A673 (cell line): ENCODE measurements at regions of chr5 and their contacts with region 1.

Region 1: DNA sequence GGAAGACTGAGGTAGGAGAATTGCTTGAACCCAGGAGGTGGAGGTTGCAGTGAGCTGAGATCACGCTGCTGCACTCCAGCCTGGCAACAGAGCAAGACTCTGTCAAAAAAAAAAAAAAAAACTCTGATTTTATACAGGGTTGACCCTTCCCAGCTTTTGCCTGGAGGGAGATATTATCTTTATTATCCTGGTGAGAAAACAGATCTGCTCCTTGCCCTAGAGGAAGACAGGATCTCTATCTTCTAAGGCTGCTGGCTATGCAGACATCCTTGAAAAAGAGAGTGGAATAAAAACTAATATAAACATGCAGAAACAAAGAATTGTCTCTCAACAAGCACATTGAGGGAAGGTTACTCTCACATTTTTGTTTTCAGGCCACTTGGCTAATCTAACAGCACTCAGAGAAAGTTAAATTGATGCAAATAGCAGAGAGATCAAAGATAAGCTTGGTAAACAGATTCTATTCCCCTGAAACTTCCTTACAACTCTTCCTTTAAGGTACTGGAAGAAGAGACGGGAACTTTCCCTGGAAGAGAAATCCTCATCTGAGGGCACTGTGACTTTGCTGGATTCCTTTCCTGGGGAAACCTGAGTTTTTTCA is 1503.3 kb upstream of the WWC1 start:
- DNase-seq: no peak
- H3K4me3 ChIP-seq: no peak overlapping the region
- H3K27ac ChIP-seq: no peak overlapping the region
- H3K4me1 ChIP-seq: no peaks in the 10 kb centered on the region
- H3K27me3 ChIP-seq: peaks cover under 1% of the 10 kb centered on the region
- CTCF ChIP-seq: no peak

Region 2: GRCh38 chr5:166188501-166189325 is 599.4 kb before region 1 on chr5:
- CTCF ChIA-PET with region 1: no interaction called
- POLR2A ChIA-PET with region 1: no interaction called
- intact Hi-C with region 1: no loop called
- DNase-seq: no peak
- H3K4me3 ChIP-seq: no peak overlapping the region
- H3K27ac ChIP-seq: no peak overlapping the region
- H3K4me1 ChIP-seq: no peaks in the 10 kb centered on the region
- H3K27me3 ChIP-seq: peaks cover 24% of the 10 kb centered on the region
- CTCF ChIP-seq: no peak

Region 3: DNA sequence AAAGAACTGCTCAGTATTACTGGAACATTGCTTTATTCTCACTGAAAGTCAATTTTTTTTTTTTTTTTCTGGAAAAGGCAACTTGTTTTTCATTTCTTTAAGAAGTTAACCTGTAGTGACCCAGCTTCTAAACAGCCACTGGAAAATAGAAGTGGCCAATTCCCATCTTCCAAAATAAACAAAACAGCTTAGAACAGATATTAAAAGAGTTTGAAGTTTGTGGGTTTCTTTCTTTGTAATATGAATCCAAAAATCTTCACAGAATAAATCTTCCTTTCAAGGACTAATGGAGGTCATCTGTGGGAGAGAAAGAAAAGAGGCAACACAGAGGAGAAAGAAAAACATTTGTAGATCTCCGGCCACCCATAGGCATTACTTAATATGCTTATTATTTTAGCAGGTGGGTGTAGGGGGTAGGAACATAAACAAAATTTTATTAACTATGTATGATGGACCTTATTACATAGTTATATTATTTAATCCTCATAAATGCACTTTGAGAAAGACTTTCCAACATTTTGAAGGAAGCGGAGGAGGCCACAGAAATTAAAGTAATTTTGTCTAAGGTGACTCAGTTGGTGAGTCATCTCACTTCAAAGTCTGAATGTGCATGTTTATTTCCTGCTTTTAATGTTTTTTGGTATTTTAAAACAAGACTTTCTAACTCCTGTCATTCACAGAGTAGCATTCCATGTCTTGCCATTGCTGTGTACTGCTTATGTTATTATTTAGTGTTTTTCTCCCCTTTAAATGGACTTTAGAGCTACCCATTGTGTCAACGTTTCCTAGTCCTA is 288.5 kb before region 1 on chr5:
- CTCF ChIA-PET with region 1: no interaction called
- POLR2A ChIA-PET with region 1: no interaction called
- intact Hi-C with region 1: no loop called
- DNase-seq: no peak
- H3K4me3 ChIP-seq: no peak overlapping the region
- H3K27ac ChIP-seq: no peak overlapping the region
- H3K4me1 ChIP-seq: no peaks in the 10 kb centered on the region
- H3K27me3 ChIP-seq: no peaks in the 10 kb centered on the region
- CTCF ChIP-seq: no peak

Region 4: GRCh38 chr5:167081561-167081960 is 293.4 kb after region 1 on chr5:
- CTCF ChIA-PET with region 1: interaction called, 10 read pairs
- POLR2A ChIA-PET with region 1: no interaction called
- intact Hi-C with region 1: no loop called
- DNase-seq: no peak
- H3K4me3 ChIP-seq: no peak overlapping the region
- H3K27ac ChIP-seq: no peak overlapping the region
- H3K4me1 ChIP-seq: no peaks in the 10 kb centered on the region
- H3K27me3 ChIP-seq: no peaks in the 10 kb centered on the region
- CTCF ChIP-seq: no peak